ENCODE measurements at regions of chr1 and their contacts with region 1.

Region 1: DNA sequence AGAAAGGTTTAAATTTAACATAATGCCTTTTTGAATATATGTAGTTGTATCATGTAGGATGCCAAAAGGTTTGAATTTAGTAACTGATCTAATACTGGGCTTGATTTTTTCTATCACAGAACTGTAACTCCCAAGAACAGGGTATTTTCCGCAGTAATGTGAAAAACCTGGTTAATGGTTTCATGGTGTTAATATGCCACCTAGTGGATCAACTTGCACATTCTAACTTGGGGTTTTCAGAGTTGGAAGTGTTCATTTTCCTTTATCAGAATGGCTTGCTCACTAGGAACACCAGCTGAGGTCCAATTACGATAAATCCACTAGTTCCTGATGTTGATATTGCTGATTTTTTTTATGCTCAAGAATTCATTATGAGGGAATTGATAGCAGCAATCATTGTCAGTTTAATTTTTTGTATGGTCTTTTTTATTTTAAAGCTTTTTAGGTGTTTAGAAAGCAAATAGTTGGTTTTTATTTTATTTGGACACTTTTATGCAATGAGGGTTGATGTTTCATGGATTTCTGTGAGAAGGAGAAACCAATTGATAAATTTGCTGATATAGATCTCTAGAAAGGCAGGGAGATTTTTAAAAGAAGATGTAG is 157.2 kb downstream of the PLA2G4A start:
- DNase-seq: no peak
- ATAC-seq: peak; percentile 68 to 81
- H3K4me3 ChIP-seq: no peak overlapping the region
- H3K27ac ChIP-seq: no peak overlapping the region
- H3K4me1 ChIP-seq: no peaks in the 10 kb centered on the region
- H3K27me3 ChIP-seq: no peaks in the 10 kb centered on the region
- CTCF ChIP-seq: peak; percentile 71

Region 2: GRCh38 chr1:186482661-186483255 is 503.2 kb before region 1 on chr1:
- intact Hi-C with region 1: loop called (anchors 5 kb)
- DNase-seq: peak; percentile 48
- ATAC-seq: peak; percentile 75 to 83
- H3K4me3 ChIP-seq: no peak overlapping the region
- H3K27ac ChIP-seq: no peak overlapping the region
- H3K4me1 ChIP-seq: no peaks in the 10 kb centered on the region
- H3K27me3 ChIP-seq: no peaks in the 10 kb centered on the region
- CTCF ChIP-seq: peak; percentile 86

Region 3: GRCh38 chr1:186605762-186606350 is 380.1 kb before region 1 on chr1:
- intact Hi-C with region 1: loop called (anchors 10 kb)
- DNase-seq: peak; percentile 48
- ATAC-seq: peak; percentile 78 to 83
- H3K4me3 ChIP-seq: no peak overlapping the region
- H3K27ac ChIP-seq: no peak overlapping the region
- H3K4me1 ChIP-seq: no peaks in the 10 kb centered on the region
- H3K27me3 ChIP-seq: no peaks in the 10 kb centered on the region
- CTCF ChIP-seq: peak; percentile 72